PC-9 (cell line): ENCODE measurements at regions of chr19 and their contacts with region 1.

Region 1: DNA sequence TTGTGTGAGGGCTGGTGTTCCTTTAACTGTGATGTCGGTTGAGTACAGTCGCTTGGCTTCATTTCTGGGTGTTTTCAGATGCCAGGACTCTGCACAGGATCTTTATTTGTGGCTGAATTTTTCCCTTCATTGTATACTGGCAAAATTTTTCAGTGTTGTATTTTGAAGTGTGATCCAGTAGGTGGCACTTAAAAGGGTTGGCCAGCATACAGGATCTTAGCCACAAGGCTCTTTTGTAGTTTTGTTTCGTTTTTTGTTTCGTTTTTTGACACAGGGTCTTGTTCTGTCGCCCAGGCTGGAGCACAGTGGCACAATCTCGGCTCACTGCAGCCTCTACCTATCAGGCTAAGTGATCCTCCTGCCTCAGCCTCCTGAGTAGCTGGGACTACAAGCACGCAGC is 8.7 kb downstream of the FCAR start:
- DNase-seq: no peak
- H3K4me3 ChIP-seq: no peak overlapping the region
- H3K27ac ChIP-seq: no peak overlapping the region
- H3K4me1 ChIP-seq: no peaks in the 10 kb centered on the region
- H3K27me3 ChIP-seq: peaks cover 31% of the 10 kb centered on the region
- CTCF ChIP-seq: no peak

Region 2: GRCh38 chr19:54921082-54921481 is 38.3 kb after region 1 on chr19:
- CTCF ChIA-PET with region 1: no interaction called
- POLR2A ChIA-PET with region 1: no interaction called
- intact Hi-C with region 1: loop called (anchors 2 kb)
- DNase-seq: no peak
- H3K4me3 ChIP-seq: no peak overlapping the region
- H3K27ac ChIP-seq: no peak overlapping the region
- H3K4me1 ChIP-seq: no peaks in the 10 kb centered on the region
- H3K27me3 ChIP-seq: no peaks in the 10 kb centered on the region; the same call in 1 of the 2 replicates
- CTCF ChIP-seq: no peak

Region 3: DNA sequence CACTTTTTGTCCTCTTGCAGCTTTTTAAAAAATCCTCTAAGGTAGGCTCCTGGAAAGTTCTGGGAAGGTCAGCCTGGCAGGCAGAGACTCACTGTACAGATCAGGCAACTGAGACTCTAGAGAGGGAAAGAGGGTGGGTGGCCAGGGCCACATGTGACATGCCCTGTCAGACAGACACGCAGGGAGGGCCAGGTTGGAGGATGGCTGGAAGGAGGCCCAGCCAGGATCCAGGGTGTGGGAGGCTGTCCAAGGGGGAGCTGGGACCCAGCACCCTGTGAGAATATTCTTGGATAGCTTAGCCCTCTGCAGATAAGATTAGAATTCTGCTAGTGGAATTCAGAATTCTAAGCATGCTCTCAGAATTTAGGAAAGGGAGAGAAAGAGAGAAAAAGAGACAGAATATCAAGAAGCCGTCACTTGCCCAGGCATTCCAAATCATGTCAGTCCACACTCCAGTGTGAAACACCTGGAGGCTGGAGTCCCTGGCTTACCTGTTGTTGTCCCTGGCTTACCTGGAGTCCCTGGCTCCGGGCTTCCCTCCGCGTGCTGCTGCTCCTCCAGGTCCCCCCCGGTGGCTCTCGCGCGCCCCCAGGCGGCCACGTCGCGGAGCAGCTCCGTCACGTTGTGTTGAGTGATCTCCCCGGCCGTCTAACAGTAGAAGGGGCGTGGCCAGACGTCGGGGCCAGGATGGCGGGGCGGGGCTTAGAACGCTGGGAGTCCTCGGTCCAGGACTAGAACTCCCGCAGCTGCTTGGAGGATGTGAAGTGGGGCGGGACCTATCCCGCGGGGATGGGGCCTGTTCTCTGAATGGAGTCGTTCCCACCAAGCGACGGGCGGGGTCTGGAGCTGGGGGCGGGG is 277.6 kb after region 1 on chr19:
- CTCF ChIA-PET with region 1: interaction called, 10 read pairs
- POLR2A ChIA-PET with region 1: no interaction called
- intact Hi-C with region 1: no loop called
- DNase-seq: peak; percentile 89 to 98
- H3K4me3 ChIP-seq: no peak overlapping the region
- H3K27ac ChIP-seq: no peak overlapping the region
- H3K4me1 ChIP-seq: peaks cover 21% of the 10 kb centered on the region
- H3K27me3 ChIP-seq: no peaks in the 10 kb centered on the region
- CTCF ChIP-seq: peak; percentile 98

Region 4: GRCh38 chr19:55418185-55418584 is 535.4 kb after region 1 on chr19:
- CTCF ChIA-PET with region 1: no interaction called
- POLR2A ChIA-PET with region 1: no interaction called
- intact Hi-C with region 1: loop called (anchors 5 kb)
- DNase-seq: peak; percentile 74 to 79
- H3K4me3 ChIP-seq: no peak overlapping the region
- H3K27ac ChIP-seq: no peak overlapping the region
- H3K4me1 ChIP-seq: no peaks in the 10 kb centered on the region
- H3K27me3 ChIP-seq: peaks cover 33% of the 10 kb centered on the region
- CTCF ChIP-seq: peak; percentile 94